CD14-positive monocyte (primary cell): ENCODE measurements at regions of chr3 and their contacts with region 1.

Region 1: DNA sequence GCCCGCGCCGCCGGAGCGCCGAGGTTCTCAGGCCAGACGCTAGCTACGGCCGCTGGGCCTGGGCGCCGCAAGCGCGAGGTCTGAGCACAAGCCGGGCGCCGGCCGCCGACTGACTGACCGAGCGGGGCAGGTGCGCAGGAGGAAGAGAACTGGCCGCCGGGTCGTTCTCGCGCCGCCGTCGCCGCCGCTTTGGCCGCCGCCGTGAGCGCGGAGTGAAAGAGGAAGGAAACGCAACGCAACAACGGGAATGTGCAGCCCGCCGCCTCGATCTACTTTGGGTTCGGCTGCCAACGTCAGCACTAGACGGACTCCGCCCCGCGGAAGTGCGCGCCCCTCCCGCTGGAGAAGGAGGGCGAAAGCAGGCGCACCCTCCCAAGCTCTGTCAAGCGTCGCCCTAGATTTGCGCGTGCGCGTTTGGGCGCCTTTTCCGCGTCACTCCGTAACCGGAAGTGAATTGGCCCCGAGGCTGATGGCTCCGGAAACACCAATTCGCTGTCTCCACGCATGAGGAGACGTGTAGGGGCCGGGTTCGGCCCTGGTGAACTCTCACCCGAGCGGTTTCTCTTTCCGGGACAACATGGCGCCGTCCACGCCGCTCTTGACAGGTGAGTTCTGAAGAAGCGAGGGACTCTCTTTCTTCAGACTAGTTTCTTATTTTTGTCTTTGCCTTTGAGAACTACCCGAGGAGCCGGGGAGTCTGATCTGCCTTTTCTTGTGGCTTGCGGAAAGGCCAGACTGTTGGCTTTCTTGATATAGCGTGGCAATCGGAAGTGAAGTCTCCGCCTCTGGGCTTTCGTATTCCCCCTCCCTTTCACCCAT is at the starts of genes EIF2A and SERP1:
- DNase-seq: peak; percentile 100
- H3K4me3 ChIP-seq: peak within 1 kb of the TSS; percentile 96 to 98 (median 97)
- H3K4me3 Mint-ChIP-seq: peak within 1 kb of the TSS; percentile 99
- H3K27ac ChIP-seq: peak within 1 kb of the TSS; percentile 93 to 99
- H3K27ac Mint-ChIP-seq: peak within 1 kb of the TSS; percentile 96 to 100 (median 99)
- H3K4me1 ChIP-seq: peaks cover 34 to 55% of the 10 kb centered on the region in 2 donors
- H3K4me1 Mint-ChIP-seq: peaks cover 51% of the 10 kb centered on the region
- H3K27me3 ChIP-seq: no peaks in the 10 kb centered on the region
- H3K27me3 Mint-ChIP-seq: peaks cover 0 to 3% (median 0%) of the 10 kb centered on the region in 3 donors
- CTCF ChIP-seq: no peak
- polyA plus RNA-seq, gene EIF2A: 48.5 to 88.7 (median 50.8) TPM
- polyA plus RNA-seq, gene SERP1: 178 to 226 (median 220) TPM

Region 2: DNA sequence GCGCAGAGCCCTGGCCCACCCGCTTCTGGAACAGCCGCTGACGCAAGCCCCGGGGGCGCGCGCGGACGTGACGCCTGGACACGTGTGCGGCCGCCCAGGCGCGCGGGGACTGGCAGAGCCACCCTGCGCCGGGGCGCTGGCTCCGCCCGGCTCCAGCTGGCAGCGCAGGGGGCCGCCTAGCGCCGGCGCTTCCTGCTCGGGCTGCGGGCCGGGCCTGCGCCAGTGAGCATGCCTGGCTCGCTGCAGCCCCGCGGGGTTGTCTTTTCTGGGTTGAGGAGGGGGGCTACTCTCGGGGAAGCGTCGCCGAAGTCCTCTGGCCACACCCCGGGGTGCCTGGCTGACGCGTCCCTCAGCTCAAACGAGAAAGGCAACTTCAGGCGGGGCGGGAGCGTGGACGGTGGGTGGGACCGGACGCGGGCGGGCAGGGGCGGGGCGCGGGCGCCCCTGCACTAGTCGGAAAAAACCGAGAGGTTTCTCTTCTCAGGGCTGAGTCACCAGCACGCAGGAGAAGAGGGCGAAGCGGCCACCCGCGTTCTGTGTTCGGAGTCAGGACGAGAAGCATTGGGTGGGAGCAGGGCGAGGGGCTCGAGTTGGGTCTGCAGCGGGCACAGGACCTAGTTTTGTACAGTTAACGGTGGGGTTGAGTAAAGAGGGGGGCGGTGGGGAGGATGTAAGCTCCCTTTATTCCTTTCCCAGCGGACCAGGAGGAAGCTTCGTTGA is 216.8 kb after region 1 on chr3 and contains the start of gene SIAH2:
- intact Hi-C with region 1: loop called (anchors 5 to 10 kb)
- DNase-seq: peak; percentile 91 to 93 (median 92)
- H3K4me3 ChIP-seq: peak within 1 kb of the TSS; percentile 82 to 86 (median 84)
- H3K4me3 Mint-ChIP-seq: peak within 1 kb of the TSS; percentile 97
- H3K27ac ChIP-seq: peak within 1 kb of the TSS; percentile 100
- H3K27ac Mint-ChIP-seq: peak within 1 kb of the TSS; percentile 100
- H3K4me1 ChIP-seq: peaks cover 36 to 41% of the 10 kb centered on the region in 2 donors
- H3K4me1 Mint-ChIP-seq: peaks cover 39% of the 10 kb centered on the region
- H3K27me3 ChIP-seq: no peaks in the 10 kb centered on the region
- H3K27me3 Mint-ChIP-seq: peaks cover 0 to 3% (median 0%) of the 10 kb centered on the region in 3 donors
- CTCF ChIP-seq: no peak
- polyA plus RNA-seq, gene SIAH2: 24.6 to 43.5 (median 28.2) TPM

Region 3: DNA sequence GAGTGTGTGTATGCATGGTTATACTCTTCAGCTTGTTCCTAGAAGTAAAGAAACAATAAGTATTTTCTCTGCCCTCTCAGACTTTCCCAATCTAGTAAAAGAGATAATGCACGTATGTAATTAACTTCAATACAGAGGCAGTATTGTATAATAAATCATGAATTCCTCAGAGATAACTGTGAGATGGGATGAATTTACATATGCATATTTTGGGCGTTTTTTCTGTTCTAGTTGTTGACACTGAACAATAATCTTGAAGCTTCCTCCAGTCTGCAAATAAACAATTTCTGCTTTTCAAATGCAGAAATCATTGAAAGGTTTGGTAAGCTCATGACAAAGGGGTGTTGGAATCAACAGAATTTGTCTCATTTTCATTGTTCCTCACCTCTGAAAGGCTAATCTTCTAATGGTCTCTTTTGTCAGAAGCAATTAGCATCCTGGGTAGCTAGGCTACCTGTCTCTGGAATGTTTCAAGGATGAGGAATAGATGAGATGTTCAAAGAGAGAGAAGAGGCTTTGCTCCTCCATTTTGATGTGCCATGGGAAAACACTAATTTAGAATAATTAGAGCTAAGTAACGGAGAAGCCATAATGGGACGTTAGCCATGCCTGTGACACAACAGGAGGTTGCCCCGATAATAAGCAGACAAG is 259.9 kb after region 1 on chr3:
- intact Hi-C with region 1: no loop called
- DNase-seq: no peak
- H3K4me3 ChIP-seq: no peak overlapping the region
- H3K4me3 Mint-ChIP-seq: no peak overlapping the region
- H3K27ac ChIP-seq: no peak overlapping the region
- H3K27ac Mint-ChIP-seq: no peak overlapping the region
- H3K4me1 ChIP-seq: no peaks in the 10 kb centered on the region
- H3K4me1 Mint-ChIP-seq: no peaks in the 10 kb centered on the region
- H3K27me3 ChIP-seq: no peaks in the 10 kb centered on the region
- H3K27me3 Mint-ChIP-seq: peaks cover 1 to 2% (median 1%) of the 10 kb centered on the region in 3 donors
- CTCF ChIP-seq: no peak